Endothelial cell of umbilical vein (primary cell): ENCODE measurements at regions of chr5 and their contacts with region 1.

Region 1: DNA sequence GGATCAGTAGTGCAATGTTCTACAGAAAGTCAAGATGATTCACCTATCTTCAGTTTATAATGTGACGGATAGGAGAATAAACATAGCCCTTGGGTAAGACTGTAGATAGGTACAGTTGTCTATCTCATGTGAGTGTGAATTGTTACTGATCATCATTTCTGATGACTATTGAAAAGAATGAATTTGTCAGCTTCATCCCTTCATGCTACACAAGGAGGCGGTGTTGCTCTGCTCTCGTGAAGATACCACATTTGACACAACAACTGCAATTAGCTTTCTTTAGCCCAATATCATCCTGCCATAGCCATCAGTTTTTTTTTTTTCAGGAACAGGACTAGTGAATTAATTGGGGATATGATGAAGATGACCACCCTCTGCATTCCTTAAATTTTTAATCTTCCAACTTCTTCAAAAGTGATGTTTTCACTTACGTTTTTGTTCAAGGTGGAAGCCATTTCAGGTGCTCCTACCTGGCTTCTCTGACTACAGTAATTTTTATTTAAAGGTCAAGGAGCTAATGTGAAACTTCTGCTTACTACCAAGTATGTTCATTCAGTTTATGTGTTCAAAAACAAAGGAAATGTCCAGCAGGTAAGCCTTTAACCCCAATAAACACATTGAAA is 152.9 kb upstream of the MOCS2 start:
- DNase-seq: peak; percentile 45
- H3K4me3 ChIP-seq: no peak overlapping the region
- H3K27ac ChIP-seq: no peak overlapping the region
- H3K4me1 ChIP-seq: no peaks in the 10 kb centered on the region
- H3K27me3 ChIP-seq: no peaks in the 10 kb centered on the region
- CTCF ChIP-seq: peak; percentile 40 to 66
- POLR2A ChIP-seq: no peak

Region 2: DNA sequence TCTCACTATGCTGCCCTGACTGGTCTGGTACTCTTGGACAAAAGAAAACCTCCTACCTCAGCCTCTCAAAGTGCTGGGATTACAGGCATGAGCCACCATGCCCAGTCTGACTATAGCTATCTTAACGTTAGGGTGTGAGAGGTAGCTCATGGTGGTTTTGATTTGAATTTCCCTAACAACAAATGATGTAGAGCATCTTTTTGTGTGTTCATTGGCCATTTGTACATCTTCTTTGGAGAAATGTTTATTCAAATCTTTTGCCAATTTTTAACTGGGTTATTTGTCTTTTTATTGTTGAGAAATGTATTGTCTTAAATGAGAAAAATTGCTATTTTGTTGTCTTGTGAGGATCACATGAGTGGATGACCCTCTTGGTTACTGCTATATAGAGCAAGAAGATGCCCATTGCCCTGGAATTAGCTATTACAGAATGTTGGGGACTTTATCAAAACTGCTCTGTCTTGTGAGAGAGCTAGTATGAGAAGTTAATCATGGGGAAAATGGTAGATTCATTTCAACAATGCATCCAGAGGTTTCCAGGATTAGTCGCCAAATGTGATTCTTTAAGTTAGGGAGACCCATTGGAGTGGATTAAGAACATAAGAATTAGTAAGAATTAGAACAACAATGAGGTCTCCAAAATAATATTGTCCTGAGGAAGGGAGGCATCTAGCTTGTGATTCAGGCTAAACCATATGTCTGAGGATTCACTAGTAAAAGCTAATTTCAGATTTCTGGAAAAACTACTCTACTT is 28.6 kb before region 1 on chr5:
- CTCF ChIA-PET with region 1: no interaction called
- POLR2A ChIA-PET with region 1: no interaction called
- dilution Hi-C with region 1: no loop called
- intact Hi-C with region 1: no loop called
- DNase-seq: no peak
- H3K4me3 ChIP-seq: no peak overlapping the region
- H3K27ac ChIP-seq: no peak overlapping the region
- H3K4me1 ChIP-seq: no peaks in the 10 kb centered on the region
- H3K27me3 ChIP-seq: no peaks in the 10 kb centered on the region
- CTCF ChIP-seq: no peak
- POLR2A ChIP-seq: no peak

Region 3: DNA sequence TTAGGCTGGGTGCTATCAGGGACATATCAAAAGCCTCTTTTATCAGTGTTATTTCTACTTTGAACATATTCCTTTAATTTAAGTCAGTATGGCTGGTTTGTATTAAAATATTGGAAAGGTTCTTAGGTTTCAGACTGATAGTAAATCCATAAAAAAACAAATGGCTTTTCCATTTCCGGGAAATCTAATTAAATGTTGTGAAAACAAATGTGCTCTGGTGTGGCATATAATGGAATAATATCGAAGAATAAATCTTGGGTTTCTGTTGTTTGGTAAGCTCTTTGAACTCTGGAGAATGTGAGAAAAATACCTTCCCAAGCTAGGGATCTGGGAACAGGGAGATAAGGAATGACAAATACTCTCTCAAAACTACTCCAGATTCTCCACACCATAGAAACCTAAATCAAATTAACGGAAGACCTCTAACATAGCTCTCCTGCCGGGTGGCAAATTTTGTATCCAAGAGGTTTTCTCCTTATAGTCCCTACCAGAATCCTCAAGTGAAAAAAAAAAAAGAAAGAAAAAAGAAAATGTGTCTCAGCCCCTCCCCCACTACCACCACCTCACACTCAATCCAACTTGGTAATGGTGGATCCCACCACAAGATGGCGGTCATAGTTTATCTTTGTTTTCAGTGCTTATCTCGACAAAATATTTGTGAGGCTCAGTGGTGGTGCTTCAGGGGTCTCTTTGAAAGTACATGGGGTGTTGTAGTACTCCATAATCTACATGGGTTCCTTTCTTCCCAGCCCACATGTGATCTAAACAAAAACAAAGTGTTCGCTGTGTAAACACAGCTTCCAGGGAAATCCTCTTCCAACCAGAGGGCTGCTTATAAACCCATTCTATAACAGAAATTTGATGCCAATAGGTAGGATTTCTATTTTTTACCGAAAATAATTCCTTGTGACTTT is 163.4 kb after region 1 on chr5:
- CTCF ChIA-PET with region 1: interaction called, 103 read pairs
- POLR2A ChIA-PET with region 1: no interaction called
- dilution Hi-C with region 1: no loop called
- intact Hi-C with region 1: loop called (anchors 1 kb)
- DNase-seq: no peak
- H3K4me3 ChIP-seq: no peak overlapping the region
- H3K27ac ChIP-seq: no peak overlapping the region
- H3K4me1 ChIP-seq: no peaks in the 10 kb centered on the region
- H3K27me3 ChIP-seq: no peaks in the 10 kb centered on the region
- CTCF ChIP-seq: peak in 1 of 2 donors; percentile 20
- POLR2A ChIP-seq: no peak

Region 4: DNA sequence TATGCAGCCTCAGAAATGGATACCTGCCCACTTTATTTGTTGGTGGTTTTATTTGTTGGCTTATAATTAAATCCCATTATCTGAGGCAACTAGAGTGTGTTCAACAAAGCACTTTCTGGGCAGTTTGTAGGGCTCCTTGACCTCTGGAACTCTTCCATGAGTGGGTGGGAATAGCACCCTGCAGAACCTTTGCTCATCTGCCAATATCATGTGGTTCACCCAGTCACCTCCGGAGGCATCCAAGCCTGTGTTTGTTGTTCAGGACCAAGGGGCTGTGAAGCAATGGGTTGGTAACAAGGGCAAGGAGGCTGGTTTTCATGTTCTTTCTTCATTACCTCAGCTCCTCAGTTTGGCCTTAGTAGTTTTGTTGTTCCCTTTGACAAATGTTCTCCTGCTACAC is 612.0 kb after region 1 on chr5:
- CTCF ChIA-PET with region 1: interaction called, 14 read pairs
- POLR2A ChIA-PET with region 1: no interaction called
- dilution Hi-C with region 1: no loop called
- intact Hi-C with region 1: loop called (anchors 10 kb)
- DNase-seq: no peak
- H3K4me3 ChIP-seq: no peak overlapping the region
- H3K27ac ChIP-seq: no peak overlapping the region
- H3K4me1 ChIP-seq: no peaks in the 10 kb centered on the region
- H3K27me3 ChIP-seq: peaks cover 0 to under 1% of the 10 kb centered on the region in 2 experiments
- CTCF ChIP-seq: no peak
- POLR2A ChIP-seq: no peak

Region 5: GRCh38 chr5:54229041-54229780 is 966.8 kb after region 1 on chr5:
- CTCF ChIA-PET with region 1: interaction called, 42 read pairs
- POLR2A ChIA-PET with region 1: no interaction called
- dilution Hi-C with region 1: no loop called
- intact Hi-C with region 1: loop called (anchors 1 kb)
- DNase-seq: peak; percentile 62
- H3K4me3 ChIP-seq: no peak overlapping the region
- H3K27ac ChIP-seq: no peak overlapping the region
- H3K4me1 ChIP-seq: no peaks in the 10 kb centered on the region
- H3K27me3 ChIP-seq: peaks cover 0 to 3% of the 10 kb centered on the region in 2 experiments
- CTCF ChIP-seq: peak; percentile 78 to 88
- POLR2A ChIP-seq: no peak